Natural killer cell (primary cell): ENCODE measurements at regions of chr2 and their contacts with region 1.

Region 1: GRCh38 chr2:160493227-160494028 is at the start of gene RBMS1:
- DNase-seq: peak; percentile 26 to 67
- ATAC-seq: peak; percentile 52 to 64 (median 55)
- H3K4me3 ChIP-seq: peak within 1 kb of the TSS; percentile 69
- H3K4me3 Mint-ChIP-seq: peak within 1 kb of the TSS; percentile 95
- H3K27ac ChIP-seq: peak within 1 kb of the TSS; percentile 38
- H3K27ac Mint-ChIP-seq: peak within 1 kb of the TSS; percentile 54 to 74
- H3K4me1 ChIP-seq: peaks cover 7% of the 10 kb centered on the region
- H3K4me1 Mint-ChIP-seq: peaks cover 0 to 10% of the 10 kb centered on the region in 2 donors
- H3K27me3 ChIP-seq: peaks cover 8% of the 10 kb centered on the region
- H3K27me3 Mint-ChIP-seq: peaks cover 9 to 18% of the 10 kb centered on the region in 2 donors
- CTCF ChIP-seq: no peak
- total RNA-seq, gene RBMS1: 111 to 167 (median 132) TPM

Region 2: DNA sequence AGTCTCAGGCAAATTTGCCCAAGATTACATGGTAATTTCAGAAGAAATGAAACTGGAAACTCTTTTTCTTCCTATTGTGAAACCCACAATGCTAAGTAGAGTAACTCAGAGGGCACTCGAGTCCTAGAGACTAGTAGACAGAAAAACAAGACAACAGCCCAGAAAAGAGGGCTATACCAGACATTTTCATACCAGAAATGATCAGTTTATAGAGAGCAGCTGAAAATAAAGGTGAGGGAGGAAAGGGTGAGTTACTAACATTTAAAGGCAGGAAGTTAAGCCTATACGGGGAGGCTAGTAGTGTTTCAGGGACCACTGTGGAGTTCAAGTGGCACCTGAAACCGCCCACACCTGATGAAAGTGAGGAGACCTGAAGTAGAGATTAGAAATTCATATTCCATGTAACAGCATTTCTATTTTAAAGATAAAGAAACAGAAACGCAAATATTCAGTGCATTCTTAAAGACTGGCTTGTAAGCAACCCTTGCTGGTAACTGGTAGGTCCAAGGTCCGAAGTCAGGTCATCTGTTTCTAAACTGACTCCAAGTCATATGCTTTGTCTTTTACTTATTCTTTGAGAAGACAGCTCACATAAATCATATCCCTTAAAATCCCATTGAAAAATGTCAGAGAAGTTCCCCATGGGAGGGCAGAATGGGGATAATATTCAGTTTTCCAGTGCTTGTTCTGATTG is 148.2 kb before region 1 on chr2:
- intact Hi-C with region 1: loop called (anchors 5 kb)
- DNase-seq: no peak
- ATAC-seq: peak in 2 of 3 donors; percentile 56 to 66
- H3K4me3 ChIP-seq: no peak overlapping the region
- H3K4me3 Mint-ChIP-seq: peak overlapping the region; percentile 58
- H3K27ac ChIP-seq: no peak overlapping the region
- H3K27ac Mint-ChIP-seq: peak overlapping the region; percentile 79 to 83
- H3K4me1 ChIP-seq: peaks cover 4% of the 10 kb centered on the region
- H3K4me1 Mint-ChIP-seq: peaks cover 81 to 85% of the 10 kb centered on the region in 2 donors
- H3K27me3 ChIP-seq: no peaks in the 10 kb centered on the region
- H3K27me3 Mint-ChIP-seq: no peaks in the 10 kb centered on the region
- CTCF ChIP-seq: no peak

Region 3: GRCh38 chr2:160472839-160473251 is 20.6 kb before region 1 on chr2:
- intact Hi-C with region 1: no loop called
- DNase-seq: no peak
- ATAC-seq: no peak
- H3K4me3 ChIP-seq: no peak overlapping the region
- H3K4me3 Mint-ChIP-seq: no peak overlapping the region
- H3K27ac ChIP-seq: no peak overlapping the region
- H3K27ac Mint-ChIP-seq: no peak overlapping the region
- H3K4me1 ChIP-seq: no peaks in the 10 kb centered on the region
- H3K4me1 Mint-ChIP-seq: no peaks in the 10 kb centered on the region
- H3K27me3 ChIP-seq: no peaks in the 10 kb centered on the region
- H3K27me3 Mint-ChIP-seq: peaks cover 2 to 7% of the 10 kb centered on the region in 2 donors
- CTCF ChIP-seq: no peak